Activated T-helper 1 cell treated with anti-CD3 and anti-CD28 coated beads, Interleukin-12 subunit alpha, Interleukin-12 subunit beta, Interleukin-2, Interleukin-4 antibody, amounts not matched to agents 30 ng/mL and 10 ng/mL and 1 ng/mL, durations not matched to agents 14 hours and 24 hours and 36 hours (primary cell): ENCODE measurements at regions of chr6 and their contacts with region 1.

Region 1: DNA sequence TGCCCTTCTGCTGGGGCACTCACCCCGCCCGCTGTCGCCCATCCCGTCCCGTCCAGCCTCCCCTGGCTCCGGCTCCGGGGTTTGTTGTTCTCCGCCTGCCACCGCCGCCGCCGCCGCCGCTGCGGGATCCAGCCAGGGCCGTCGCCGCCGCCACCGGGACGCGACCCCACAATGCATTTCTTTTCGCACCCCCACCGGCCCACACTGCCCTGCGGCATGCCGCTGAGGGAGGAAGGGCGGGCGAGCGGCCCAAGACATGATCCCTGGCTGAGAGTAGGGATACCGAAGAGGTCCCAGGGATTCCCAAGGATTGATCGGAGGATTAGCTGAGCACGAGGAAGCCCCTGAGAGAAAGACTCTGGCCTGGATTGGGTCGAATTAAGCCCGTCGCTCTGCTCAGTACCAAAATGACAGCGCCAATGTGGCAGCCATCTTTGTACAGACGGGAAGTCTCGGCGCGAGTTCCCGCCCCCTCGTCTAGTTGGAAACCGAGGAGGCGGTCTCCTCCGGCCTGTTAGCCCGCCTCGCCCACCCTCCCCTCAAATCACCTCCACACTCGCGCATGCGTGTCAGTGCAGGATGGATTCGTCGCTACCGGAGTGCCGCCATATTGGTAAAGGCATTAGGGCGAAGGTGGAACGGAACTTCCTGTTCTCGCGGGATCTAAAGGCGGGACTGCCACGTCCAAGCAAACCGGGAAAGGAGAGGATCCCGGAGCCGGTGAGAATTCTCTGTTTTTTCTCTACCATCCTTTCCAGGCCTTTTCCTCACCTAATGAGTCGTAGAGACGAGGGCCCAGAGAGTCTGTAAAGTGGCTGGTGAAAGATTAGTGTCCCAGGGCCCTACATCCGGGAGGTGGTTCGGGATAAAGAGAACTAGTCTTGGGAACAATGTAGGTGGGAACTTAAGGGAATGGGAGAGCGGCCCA is at the starts of genes RXRB and SLC39A7:
- DNase-seq: peak; percentile 97
- H3K4me3 Mint-ChIP-seq: peak within 1 kb of the TSS; percentile 100
- H3K27ac Mint-ChIP-seq: peak within 1 kb of the TSS; percentile 97
- H3K4me1 Mint-ChIP-seq: peaks cover 75% of the 10 kb centered on the region
- H3K27me3 Mint-ChIP-seq: no peaks in the 10 kb centered on the region
- total RNA-seq, gene RXRB: 46.6 and 47.4 TPM in 2 replicates
- total RNA-seq, gene SLC39A7: 67.1 and 68.8 TPM in 2 replicates

Region 2: GRCh38 chr6:32843979-32844838 is 356.3 kb before region 1 on chr6 and contains the start of gene PSMB8:
- intact Hi-C with region 1: loop called (anchors 2 kb)
- DNase-seq: peak; percentile 96
- H3K4me3 Mint-ChIP-seq: peak within 1 kb of the TSS; percentile 93
- H3K27ac Mint-ChIP-seq: peak within 1 kb of the TSS; percentile 98
- H3K4me1 Mint-ChIP-seq: peaks cover 82% of the 10 kb centered on the region
- H3K27me3 Mint-ChIP-seq: no peaks in the 10 kb centered on the region
- total RNA-seq, gene PSMB8: 353 and 358 TPM in 2 replicates

Region 3: DNA sequence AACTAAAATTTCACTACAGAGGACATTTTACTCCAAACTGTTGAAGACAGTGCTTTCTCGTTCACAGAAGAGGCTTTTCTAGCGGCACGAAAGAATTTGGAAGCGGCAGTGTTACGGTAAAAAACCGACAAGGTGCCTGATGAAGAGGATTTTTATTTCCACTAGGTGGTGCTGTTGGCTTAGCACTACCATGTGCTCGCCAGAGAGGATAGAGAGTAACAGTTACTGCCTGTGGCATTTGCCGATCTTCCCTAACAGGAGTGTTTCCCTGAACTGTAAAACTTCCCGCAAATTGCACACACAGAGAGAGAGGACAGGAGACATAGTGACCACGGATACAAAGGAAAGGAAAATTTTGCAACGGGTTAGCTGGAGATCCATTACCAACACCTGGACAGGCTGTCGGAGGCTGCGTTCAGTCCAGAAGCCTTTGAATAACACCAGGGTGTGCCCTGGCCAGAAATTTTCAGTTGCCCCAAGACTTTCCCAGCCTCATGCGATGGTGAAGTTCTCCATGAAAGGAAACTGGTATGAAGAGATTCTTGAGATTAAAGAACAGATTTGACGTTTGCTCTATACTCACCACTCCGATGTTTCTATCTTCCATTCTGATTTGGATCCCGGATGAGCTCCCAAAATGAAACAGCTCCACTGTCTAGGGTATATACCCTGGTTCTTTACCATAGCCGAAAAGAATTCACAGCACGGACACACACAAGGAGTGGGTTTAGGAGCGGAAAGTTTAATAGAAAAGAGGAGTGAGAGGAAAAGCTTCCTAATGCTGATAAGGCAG is 76.6 kb before region 1 on chr6:
- intact Hi-C with region 1: loop called (anchors 1 kb)
- DNase-seq: no peak
- H3K4me3 Mint-ChIP-seq: no peak overlapping the region
- H3K27ac Mint-ChIP-seq: no peak overlapping the region
- H3K4me1 Mint-ChIP-seq: peaks cover 19% of the 10 kb centered on the region
- H3K27me3 Mint-ChIP-seq: peaks cover 26% of the 10 kb centered on the region

Region 4: GRCh38 chr6:33271458-33272274 is 71.2 kb after region 1 on chr6 and contains the starts of genes RPS18 and VPS52:
- intact Hi-C with region 1: loop called (anchors 1 kb)
- DNase-seq: peak; percentile 89
- H3K4me3 Mint-ChIP-seq: peak within 1 kb of the TSS; percentile 97
- H3K27ac Mint-ChIP-seq: peak within 1 kb of the TSS; percentile 99
- H3K4me1 Mint-ChIP-seq: peaks cover 55% of the 10 kb centered on the region
- H3K27me3 Mint-ChIP-seq: no peaks in the 10 kb centered on the region
- total RNA-seq, gene RPS18: 2,930 and 2,946 TPM in 2 replicates
- total RNA-seq, gene VPS52: 59.8 and 63.5 TPM in 2 replicates

Region 5: GRCh38 chr6:33417903-33418689 is 217.6 kb after region 1 on chr6 and contains the start of gene CUTA:
- intact Hi-C with region 1: loop called (anchors 2 kb)
- DNase-seq: peak; percentile 98
- H3K4me3 Mint-ChIP-seq: peak within 1 kb of the TSS; percentile 95
- H3K27ac Mint-ChIP-seq: peak within 1 kb of the TSS; percentile 96
- H3K4me1 Mint-ChIP-seq: peaks cover 70% of the 10 kb centered on the region
- H3K27me3 Mint-ChIP-seq: no peaks in the 10 kb centered on the region
- total RNA-seq, gene CUTA: 131 and 137 TPM in 2 replicates

Region 6: GRCh38 chr6:33711140-33712129 is 511.0 kb after region 1 on chr6 and contains the start of gene UQCC2:
- intact Hi-C with region 1: loop called (anchors 10 kb)
- DNase-seq: peak; percentile 96
- H3K4me3 Mint-ChIP-seq: peak within 1 kb of the TSS; percentile 95
- H3K27ac Mint-ChIP-seq: peak within 1 kb of the TSS; percentile 99
- H3K4me1 Mint-ChIP-seq: peaks cover 42% of the 10 kb centered on the region
- H3K27me3 Mint-ChIP-seq: peaks cover 3% of the 10 kb centered on the region
- total RNA-seq, gene UQCC2: 123 and 139 TPM in 2 replicates